ENCODE measurements at regions of chr5 and their contacts with region 1.

Region 1: DNA sequence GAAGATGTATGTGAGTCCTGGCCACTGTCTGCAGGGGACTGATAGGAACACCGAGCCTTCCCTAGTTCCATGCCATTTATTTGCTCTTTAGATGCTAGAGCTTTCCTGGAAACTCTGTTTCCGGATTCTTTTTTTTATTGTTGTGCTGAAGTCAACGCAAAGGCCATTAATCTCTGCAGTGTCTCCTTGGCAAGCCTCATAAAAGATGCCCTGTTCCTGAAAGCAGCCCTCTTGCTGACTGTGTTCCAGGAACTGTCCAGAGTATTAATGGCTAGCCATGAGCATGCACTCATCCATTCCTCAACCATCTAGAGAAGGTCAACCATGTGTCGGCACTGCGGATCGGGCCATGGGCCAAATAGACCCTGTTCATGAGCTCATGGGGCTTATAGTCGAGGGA is 42.9 kb upstream of the SMAD5 start:
- DNase-seq: peak; percentile 33 to 71
- ATAC-seq: peak; percentile 82

Region 2: DNA sequence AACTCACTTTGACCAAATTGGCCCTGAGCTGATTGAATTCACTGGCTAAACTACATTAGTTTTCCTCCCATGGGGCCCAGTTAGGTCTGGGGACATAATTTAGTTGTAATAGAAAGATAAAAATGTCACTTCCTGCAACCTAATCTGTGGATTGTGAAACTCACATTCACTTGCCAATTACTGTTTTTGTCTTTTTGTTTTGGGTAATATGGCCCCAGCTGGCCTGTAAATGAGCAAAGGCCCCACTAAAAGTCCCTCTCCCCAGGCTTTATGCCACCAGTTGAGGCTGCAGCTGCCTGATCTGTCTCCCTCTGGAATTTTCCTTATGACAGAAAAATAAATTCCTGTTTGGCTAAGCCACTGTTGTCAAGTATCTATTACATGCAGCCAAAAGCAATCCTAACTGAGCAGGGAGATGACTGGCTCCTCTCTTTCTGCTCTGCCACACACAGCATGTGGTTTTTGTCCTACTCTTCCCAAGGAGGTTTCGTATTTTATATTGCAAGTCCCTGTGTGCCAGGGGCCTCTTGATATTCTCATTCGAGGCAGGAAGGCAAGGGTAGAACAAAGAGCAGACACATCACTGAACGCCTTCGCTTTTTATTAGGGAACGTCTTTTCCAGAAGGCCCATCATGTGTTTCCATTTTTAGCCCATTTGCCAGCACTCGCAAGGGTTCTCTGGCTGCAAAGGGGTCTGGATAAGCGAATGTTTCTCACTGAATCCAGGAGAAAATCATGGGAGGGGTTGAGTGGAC is 279.4 kb before region 1 on chr5:
- intact Hi-C with region 1: no loop called
- DNase-seq: no peak
- ATAC-seq: no peak

Region 3: DNA sequence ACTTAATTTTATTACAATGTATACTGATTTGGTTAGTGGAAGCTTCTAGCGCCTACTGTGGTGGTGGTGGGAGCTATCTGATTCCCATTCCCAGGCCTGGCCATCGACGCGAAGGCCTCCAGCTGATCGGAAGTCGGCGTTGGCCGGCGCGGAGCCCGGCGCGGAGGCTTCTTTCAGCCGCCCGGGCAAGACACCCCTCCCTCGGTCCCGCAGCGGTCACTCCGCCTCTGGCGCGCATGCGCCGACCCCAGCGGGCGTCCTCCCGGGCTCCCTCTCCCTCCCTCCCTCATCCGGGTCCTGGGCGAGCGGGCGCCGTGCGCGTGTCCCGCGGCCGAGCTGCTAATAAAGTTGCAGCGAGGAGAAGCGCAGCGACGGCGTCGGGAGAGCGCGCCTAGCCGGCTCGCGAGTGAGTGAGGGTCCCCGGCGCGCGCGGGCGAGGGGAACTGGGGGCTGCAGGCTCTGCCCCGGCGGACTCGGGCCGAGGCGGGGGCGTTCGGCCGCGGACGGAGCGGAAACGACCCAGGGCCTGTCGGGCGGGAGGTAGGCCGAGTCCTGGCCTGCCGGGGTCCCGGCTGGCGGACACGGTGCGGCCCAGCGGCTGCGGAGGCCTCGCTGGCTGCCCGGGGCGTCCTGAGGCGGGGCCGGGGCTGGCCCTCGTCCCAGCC is 42.9 kb after region 1 on chr5 and contains the start of gene SMAD5:
- intact Hi-C with region 1: loop called in 1 of 2 experiments (anchors 5 kb)
- DNase-seq: peak; percentile 94 to 97
- ATAC-seq: peak; percentile 95
- total RNA-seq, gene SMAD5: 45.6 to 46.8 TPM

Region 4: GRCh38 chr5:136538534-136538933 is 448.7 kb after region 1 on chr5:
- intact Hi-C with region 1: no loop called
- DNase-seq: no peak
- ATAC-seq: no peak

Measured in left colon (tissue), 2 donors.